ENCODE measurements at regions of chr19 and their contacts with region 1.

Region 1: GRCh38 chr19:29478578-29479565 is 46.9 kb upstream of the VSTM2B start:
- DNase-seq: peak; percentile 69 to 85
- H3K4me3 ChIP-seq: no peak overlapping the region
- H3K27ac ChIP-seq: no peak overlapping the region
- H3K4me1 ChIP-seq: peaks cover 0 to 4% (median 3%) of the 10 kb centered on the region in 4 experiments; a peak in 2 of 7 replicates
- H3K27me3 ChIP-seq: no peaks in the 10 kb centered on the region; a peak in 1 of 7 replicates
- CTCF ChIP-seq: peak; percentile 83 to 92 (median 87)
- EP300 ChIP-seq: no peak
- POLR2A ChIP-seq: no peak
- RAD21 ChIP-seq: peak; percentile 83 to 88

Region 2: GRCh38 chr19:29393915-29394460 is 84.9 kb before region 1 on chr19:
- CTCF ChIA-PET with region 1: interaction called, 11 read pairs
- POLR2A ChIA-PET with region 1: no interaction called
- DNase-seq: no peak
- H3K4me3 ChIP-seq: no peak overlapping the region
- H3K27ac ChIP-seq: no peak overlapping the region
- H3K4me1 ChIP-seq: peaks cover 0 to 10% (median 4%) of the 10 kb centered on the region in 4 experiments; a peak in 5 of 7 replicates
- H3K27me3 ChIP-seq: no peaks in the 10 kb centered on the region; a peak in 1 of 7 replicates
- CTCF ChIP-seq: peak in 1 of 3 experiments; percentile 51; a peak in 1 of 4 replicates
- EP300 ChIP-seq: no peak
- POLR2A ChIP-seq: no peak
- RAD21 ChIP-seq: peak in 1 of 2 experiments; percentile 36; a peak in 2 of 4 replicates

Region 3: GRCh38 chr19:29415507-29415906 is 63.4 kb before region 1 on chr19:
- CTCF ChIA-PET with region 1: interaction called, 15 read pairs
- POLR2A ChIA-PET with region 1: no interaction called
- DNase-seq: peak in 1 of 2 experiments; percentile 54
- H3K4me3 ChIP-seq: no peak overlapping the region
- H3K27ac ChIP-seq: no peak overlapping the region
- H3K4me1 ChIP-seq: no peaks in the 10 kb centered on the region
- H3K27me3 ChIP-seq: no peaks in the 10 kb centered on the region
- CTCF ChIP-seq: peak; percentile 65 to 75 (median 66)
- EP300 ChIP-seq: no peak
- POLR2A ChIP-seq: no peak
- RAD21 ChIP-seq: peak; percentile 47 to 64

Region 4: DNA sequence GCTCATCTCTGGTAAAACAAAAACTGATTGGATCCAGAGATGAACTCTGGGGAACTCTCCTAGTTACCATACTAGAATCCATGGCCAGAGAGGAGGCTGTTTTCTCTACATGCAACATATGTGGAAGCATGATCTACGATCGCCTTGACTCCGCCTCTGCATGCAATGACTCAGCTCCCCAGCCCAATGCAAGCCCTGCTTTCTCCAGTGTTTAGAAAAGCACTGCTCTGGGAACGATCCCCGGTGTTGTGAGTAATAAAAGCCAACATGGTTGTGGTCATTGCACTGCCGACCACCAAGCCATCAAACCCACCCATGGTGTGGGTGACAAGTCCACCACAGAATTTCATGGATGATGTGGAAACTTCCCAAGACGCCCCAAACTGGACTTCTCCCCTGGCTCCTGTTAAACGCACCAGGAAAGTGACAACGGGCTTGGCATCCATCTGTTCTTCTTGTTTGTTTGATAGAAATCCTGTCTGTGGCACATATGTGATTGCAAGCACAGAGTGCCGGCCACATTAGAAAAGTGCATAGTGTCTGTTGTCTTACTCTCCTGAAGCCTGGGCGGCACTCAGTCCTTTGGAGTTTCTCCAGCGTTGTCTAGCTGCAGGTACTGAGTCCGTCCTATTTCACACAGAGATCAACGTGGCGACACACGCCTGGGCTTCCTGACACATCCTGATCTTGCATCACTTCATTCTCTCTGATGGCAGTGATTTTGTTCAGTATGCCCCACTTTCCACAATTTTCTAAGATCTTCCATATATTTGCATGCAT is 10.5 kb after region 1 on chr19:
- CTCF ChIA-PET with region 1: interaction called, 16 read pairs
- POLR2A ChIA-PET with region 1: no interaction called
- DNase-seq: no peak
- H3K4me3 ChIP-seq: no peak overlapping the region
- H3K27ac ChIP-seq: no peak overlapping the region
- H3K4me1 ChIP-seq: peaks cover 0 to 2% (median under 1%) of the 10 kb centered on the region in 4 experiments; a peak in 3 of 7 replicates
- H3K27me3 ChIP-seq: no peaks in the 10 kb centered on the region; a peak in 1 of 7 replicates
- CTCF ChIP-seq: no peak
- EP300 ChIP-seq: no peak
- POLR2A ChIP-seq: no peak
- RAD21 ChIP-seq: no peak

Region 5: DNA sequence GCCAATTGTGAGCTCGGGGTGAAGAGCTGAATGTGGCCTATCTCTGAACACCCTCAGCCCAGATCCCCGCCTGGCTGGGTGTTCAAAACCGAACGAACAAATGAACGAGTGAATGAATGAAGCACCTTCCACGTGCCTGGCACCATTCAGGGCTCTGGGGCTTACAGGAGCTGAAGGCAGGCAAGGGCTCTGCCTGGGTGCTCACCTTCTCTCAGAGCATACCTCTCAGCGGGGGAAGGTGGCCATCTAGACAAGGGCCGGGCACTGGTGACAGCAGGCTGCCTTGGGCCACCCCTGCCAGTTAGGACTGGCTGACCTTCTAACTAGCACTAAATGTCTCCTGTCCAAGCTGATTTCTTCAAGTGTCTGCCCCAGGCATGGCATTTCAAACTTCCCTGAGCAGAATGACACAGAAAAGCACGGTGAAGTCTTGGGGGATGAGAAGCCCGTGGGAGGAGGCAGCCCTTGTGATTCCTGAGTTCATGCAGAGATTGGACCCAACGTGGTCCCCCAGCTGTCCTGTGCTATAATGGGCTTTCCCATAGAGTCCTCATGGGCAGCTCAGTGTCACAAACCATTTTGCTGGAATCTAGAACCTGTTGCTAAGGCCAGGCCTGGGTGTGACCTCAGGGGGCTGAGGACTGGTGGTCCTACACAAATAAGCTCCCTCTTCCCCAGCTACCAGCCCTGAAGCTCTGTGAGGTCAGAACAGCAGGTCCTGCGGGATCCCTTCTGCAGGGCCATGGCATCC is 19.0 kb after region 1 on chr19:
- CTCF ChIA-PET with region 1: interaction called, 17 read pairs
- POLR2A ChIA-PET with region 1: no interaction called
- DNase-seq: no peak
- H3K4me3 ChIP-seq: no peak overlapping the region
- H3K27ac ChIP-seq: no peak overlapping the region
- H3K4me1 ChIP-seq: peaks cover 2 to 4% (median 2%) of the 10 kb centered on the region in 4 experiments; a peak in 4 of 7 replicates
- H3K27me3 ChIP-seq: no peaks in the 10 kb centered on the region
- CTCF ChIP-seq: no peak
- EP300 ChIP-seq: no peak
- POLR2A ChIP-seq: no peak
- RAD21 ChIP-seq: no peak

Region 6: GRCh38 chr19:29505097-29505824 is 26.4 kb after region 1 on chr19:
- CTCF ChIA-PET with region 1: interaction called, 14 read pairs
- POLR2A ChIA-PET with region 1: no interaction called
- DNase-seq: no peak
- H3K4me3 ChIP-seq: no peak overlapping the region
- H3K27ac ChIP-seq: no peak overlapping the region
- H3K4me1 ChIP-seq: peaks cover 0 to 7% (median 3%) of the 10 kb centered on the region in 4 experiments; a peak in 3 of 7 replicates
- H3K27me3 ChIP-seq: no peaks in the 10 kb centered on the region
- CTCF ChIP-seq: no peak
- EP300 ChIP-seq: no peak
- POLR2A ChIP-seq: no peak
- RAD21 ChIP-seq: no peak

Region 7: DNA sequence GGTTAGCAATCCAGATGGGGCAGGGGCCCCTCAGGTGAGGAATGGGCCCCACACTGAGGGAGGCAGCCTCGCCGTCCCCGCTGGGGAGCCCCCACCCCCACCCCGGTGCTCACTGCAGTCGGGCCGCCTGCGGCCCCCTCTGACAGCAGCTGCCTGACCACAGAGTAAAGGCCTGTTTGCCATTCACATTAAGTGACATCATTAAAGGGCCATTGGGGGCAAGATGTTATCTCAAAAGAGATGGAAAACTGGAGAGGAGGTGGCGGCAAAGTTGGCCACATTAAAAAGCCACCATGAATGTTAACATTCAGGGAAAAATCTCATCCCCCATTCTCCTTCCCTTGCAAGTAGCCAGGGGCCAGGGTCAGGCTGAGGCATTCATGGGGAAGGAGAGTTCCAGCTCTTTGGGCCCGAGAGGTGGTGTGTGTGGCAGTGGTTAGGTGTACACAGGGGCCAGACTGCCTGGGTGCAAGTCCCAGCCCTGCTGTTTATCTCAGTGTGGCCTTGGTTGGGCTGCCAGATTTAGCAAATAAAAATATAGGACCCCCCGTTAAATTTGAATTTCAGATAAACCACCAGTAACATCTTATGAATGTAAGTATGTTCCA is 67.8 kb after region 1 on chr19:
- CTCF ChIA-PET with region 1: no interaction called
- POLR2A ChIA-PET with region 1: no interaction called
- DNase-seq: no peak
- H3K4me3 ChIP-seq: no peak overlapping the region
- H3K27ac ChIP-seq: no peak overlapping the region
- H3K4me1 ChIP-seq: no peaks in the 10 kb centered on the region
- H3K27me3 ChIP-seq: no peaks in the 10 kb centered on the region
- CTCF ChIP-seq: no peak
- EP300 ChIP-seq: no peak
- POLR2A ChIP-seq: no peak
- RAD21 ChIP-seq: no peak

Region 8: DNA sequence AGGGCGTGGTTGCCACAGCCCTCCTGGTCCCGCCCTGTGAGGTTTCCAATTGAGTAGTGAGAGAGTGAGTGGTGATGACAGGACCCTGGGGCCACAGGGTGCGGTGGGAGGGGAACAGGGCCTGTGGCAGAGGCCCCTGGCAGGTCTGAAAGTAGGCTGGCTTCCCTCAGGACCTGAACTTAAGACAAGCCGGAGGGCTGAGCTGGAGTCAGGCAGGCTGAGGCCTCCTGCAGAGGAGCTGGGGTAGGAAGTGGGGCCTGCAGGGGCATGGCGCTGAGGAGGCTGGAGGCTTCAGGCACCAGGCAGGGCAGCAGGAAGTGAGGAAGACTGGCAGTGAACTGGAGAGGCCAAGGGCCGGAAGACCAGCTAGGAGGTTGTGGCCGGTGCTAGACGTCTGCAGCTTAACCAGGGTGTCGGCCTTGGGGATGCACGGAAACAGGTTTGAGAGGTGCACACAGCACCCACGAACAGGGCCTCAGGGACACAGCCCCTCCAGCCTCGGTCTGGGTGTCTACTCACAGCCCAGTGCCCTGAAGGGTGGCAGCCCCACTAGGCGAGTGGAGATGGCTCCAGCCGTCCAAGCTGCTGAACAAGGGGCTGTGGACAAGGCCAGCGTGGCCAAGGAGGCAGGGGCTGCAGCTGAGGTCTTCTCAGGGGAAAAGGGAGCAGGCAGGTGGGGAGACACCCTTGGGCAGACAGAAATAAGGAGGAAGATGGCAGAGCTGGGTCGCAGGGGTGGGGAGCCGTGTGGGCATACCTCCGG is 145.0 kb after region 1 on chr19:
- CTCF ChIA-PET with region 1: no interaction called
- POLR2A ChIA-PET with region 1: no interaction called
- DNase-seq: no peak
- H3K4me3 ChIP-seq: no peak overlapping the region
- H3K27ac ChIP-seq: no peak overlapping the region
- H3K4me1 ChIP-seq: peaks cover 2 to 9% (median 5%) of the 10 kb centered on the region in 4 experiments; a peak in 6 of 7 replicates
- H3K27me3 ChIP-seq: peaks cover 0 to 2% (median 0%) of the 10 kb centered on the region in 4 experiments; a peak in 2 of 7 replicates
- CTCF ChIP-seq: no peak
- EP300 ChIP-seq: no peak
- POLR2A ChIP-seq: no peak
- RAD21 ChIP-seq: no peak

Region 9: GRCh38 chr19:29658221-29658991 is 179.5 kb after region 1 on chr19:
- CTCF ChIA-PET with region 1: no interaction called
- POLR2A ChIA-PET with region 1: no interaction called
- DNase-seq: no peak
- H3K4me3 ChIP-seq: no peak overlapping the region
- H3K27ac ChIP-seq: no peak overlapping the region
- H3K4me1 ChIP-seq: no peaks in the 10 kb centered on the region
- H3K27me3 ChIP-seq: no peaks in the 10 kb centered on the region
- CTCF ChIP-seq: no peak
- EP300 ChIP-seq: no peak
- POLR2A ChIP-seq: no peak
- RAD21 ChIP-seq: no peak

Measured in H1 (cell line).